AG04449 (cell line): ENCODE measurements at regions of chr7 and their contacts with region 1.

Region 1: GRCh38 chr7:116180302-116180701 is 30.0 kb upstream of the TES start:
- DNase-seq: no peak
- H3K4me3 ChIP-seq: no peak overlapping the region
- CTCF ChIP-seq: peak; percentile 66

Region 2: GRCh38 chr7:115984120-115984519 is 196.2 kb before region 1 on chr7:
- CTCF ChIA-PET with region 1: no interaction called
- POLR2A ChIA-PET with region 1: no interaction called
- DNase-seq: no peak
- H3K4me3 ChIP-seq: no peak overlapping the region
- CTCF ChIP-seq: no peak

Region 3: DNA sequence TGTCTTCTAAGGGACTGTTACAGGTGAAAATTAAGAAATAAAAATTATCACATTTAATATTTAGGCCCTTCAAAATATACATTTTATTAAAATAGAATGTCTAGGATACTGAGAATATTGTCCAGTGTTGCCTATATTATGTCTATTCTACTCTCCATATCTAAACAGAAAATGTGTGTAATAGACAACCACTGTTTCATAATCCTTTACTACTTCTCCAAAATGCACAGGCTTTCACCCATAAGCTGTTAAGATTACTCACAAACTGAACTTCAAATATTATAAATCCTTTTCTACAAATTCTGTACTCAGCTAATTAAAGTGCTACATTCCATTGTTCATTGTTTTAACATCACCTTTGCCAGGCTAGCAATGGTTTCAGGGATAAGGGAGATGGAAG is 93.0 kb before region 1 on chr7:
- CTCF ChIA-PET with region 1: no interaction called
- POLR2A ChIA-PET with region 1: no interaction called
- DNase-seq: no peak
- H3K4me3 ChIP-seq: no peak overlapping the region
- CTCF ChIP-seq: no peak

Region 4: DNA sequence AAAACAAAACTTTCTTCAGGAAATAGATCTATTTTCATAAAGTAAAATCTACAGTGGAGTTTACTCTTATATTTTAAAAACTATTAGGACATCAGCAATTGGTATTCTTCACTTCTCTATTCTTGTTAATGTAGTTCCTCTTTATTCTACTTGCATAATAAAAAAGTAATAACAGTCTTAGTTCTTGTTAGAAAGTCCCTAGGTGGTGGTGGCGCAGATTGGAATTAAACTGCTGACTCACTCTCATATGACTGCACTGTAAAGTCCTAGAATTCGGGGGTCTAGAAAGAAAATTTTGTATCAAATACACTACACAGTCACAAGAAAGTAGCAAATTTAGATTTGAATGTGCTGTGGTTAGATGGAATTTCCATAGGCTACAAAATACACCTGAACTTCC is 14.6 kb before region 1 on chr7:
- CTCF ChIA-PET with region 1: interaction called, 14 read pairs
- POLR2A ChIA-PET with region 1: no interaction called
- DNase-seq: no peak
- H3K4me3 ChIP-seq: no peak overlapping the region
- CTCF ChIP-seq: no peak

Region 5: GRCh38 chr7:116206141-116206540 is 25.8 kb after region 1 on chr7:
- CTCF ChIA-PET with region 1: interaction called, 57 read pairs
- POLR2A ChIA-PET with region 1: interaction called, 20 read pairs
- DNase-seq: no peak
- H3K4me3 ChIP-seq: no peak overlapping the region
- CTCF ChIP-seq: no peak

Region 6: DNA sequence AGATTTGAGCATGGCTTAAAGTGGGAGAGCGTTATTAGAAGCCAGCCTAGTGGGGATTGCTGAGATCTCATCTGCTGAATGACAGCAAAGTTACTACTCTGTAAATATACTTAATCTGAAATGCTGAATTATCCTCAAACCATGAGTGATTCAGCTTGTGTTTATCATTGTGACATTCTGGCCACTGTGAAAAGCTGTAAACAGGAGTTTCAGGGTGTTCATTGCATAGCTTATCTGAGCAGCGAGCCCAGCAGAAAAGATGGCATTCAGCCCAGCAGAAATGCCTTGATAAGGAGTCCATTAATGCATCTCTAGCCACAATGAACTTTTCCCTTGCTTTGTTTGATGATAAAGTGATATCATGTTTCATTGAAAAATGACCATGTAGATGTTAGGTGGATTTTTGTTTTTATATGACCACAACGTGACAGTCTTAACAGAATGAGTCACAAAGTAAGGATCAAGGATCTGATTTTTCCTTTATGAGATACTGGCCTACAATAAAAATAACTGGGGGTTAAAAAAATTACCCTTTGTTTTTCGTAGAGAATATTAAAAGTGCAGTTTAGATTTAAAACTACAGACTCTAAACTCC is 37.8 kb after region 1 on chr7:
- CTCF ChIA-PET with region 1: interaction called, 34 read pairs
- POLR2A ChIA-PET with region 1: interaction called, 3 read pairs
- DNase-seq: no peak
- H3K4me3 ChIP-seq: no peak overlapping the region
- CTCF ChIP-seq: no peak

Region 7: GRCh38 chr7:116236020-116236630 is 55.8 kb after region 1 on chr7:
- CTCF ChIA-PET with region 1: interaction called, 567 read pairs
- POLR2A ChIA-PET with region 1: no interaction called
- DNase-seq: no peak
- H3K4me3 ChIP-seq: no peak overlapping the region
- CTCF ChIP-seq: peak; percentile 8

Region 8: DNA sequence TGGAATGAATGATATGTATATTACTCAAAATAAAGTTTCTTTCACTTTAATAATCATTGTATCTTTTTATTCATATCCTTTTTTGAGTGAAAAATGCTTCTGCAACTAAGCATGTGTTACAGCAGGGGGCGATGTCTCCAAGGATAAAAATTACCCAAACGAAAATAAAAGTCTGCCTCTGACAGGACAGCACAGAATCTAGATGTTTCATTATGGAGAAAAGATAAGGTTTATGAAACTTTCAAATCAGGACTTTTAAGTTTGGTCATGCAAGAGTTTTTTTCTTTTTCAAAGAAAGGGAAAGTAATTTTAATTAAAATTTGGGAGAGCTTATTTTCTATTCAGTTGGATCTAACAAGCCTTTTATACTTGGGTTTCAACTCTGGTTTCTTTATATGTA is 78.4 kb after region 1 on chr7:
- CTCF ChIA-PET with region 1: interaction called, 43 read pairs
- POLR2A ChIA-PET with region 1: interaction called, 6 read pairs
- DNase-seq: no peak
- H3K4me3 ChIP-seq: no peak overlapping the region
- CTCF ChIP-seq: peak; percentile 31